HEK293 (cell line): ENCODE measurements at regions of chr12 and their contacts with region 1.

Region 1: GRCh38 chr12:68745904-68746571 is at the start of gene SLC35E3:
- H3K4me3 ChIP-seq: peak within 1 kb of the TSS; percentile 55
- H3K27ac ChIP-seq: peak within 1 kb of the TSS; percentile 11; the same call in 1 of the 2 replicates
- H3K4me1 ChIP-seq: no peaks in the 10 kb centered on the region
- CTCF ChIP-seq: no peak

Region 2: GRCh38 chr12:68675101-68675842 is 70.8 kb before region 1 on chr12:
- CTCF ChIA-PET with region 1: no interaction called
- POLR2A ChIA-PET with region 1: no interaction called
- H3K4me3 ChIP-seq: no peak overlapping the region
- H3K27ac ChIP-seq: no peak overlapping the region
- H3K4me1 ChIP-seq: no peaks in the 10 kb centered on the region
- CTCF ChIP-seq: no peak

Region 3: DNA sequence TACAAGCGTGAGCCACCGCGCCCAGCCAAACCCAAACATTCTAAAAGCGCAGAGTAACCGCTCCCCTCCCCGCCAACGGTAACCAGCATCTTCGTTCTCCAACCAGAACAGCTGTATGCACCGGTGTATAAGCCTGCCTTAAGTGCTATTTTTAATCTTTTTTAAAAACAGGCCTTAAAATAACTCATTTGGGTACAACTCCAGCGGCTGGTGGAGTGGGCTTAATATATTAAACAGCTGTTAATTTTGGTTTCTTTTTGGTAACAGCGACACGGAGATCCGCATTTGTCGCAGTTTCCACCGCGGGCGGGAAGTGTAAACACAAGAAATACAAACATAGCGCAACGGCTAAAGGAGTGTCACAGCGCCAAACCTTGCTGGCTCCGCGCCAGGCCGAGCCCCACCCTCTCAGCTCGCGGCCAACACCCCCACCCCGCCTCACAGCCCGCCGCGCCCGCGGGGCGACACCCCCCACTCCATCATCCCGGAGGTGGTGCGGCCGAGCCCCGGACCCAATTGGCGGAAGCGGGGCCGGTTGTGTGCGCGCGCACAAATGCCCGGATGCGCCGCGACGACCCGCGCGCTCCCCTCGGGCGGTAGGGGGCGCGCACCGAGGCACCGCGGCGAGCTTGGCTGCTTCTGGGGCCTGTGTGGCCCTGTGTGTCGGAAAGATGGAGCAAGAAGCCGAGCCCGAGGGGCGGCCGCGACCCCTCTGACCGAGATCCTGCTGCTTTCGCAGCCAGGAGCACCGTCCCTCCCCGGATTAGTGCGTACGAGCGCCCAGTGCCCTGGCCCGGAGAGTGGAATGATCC is 61.7 kb after region 1 on chr12 and contains the start of gene MDM2:
- CTCF ChIA-PET with region 1: interaction called, 5 read pairs
- POLR2A ChIA-PET with region 1: interaction called, 61 read pairs
- H3K4me3 ChIP-seq: peak within 1 kb of the TSS; percentile 97
- H3K27ac ChIP-seq: peak within 1 kb of the TSS; percentile 100
- H3K4me1 ChIP-seq: peaks cover 8% of the 10 kb centered on the region; the same call in 1 of the 2 replicates
- CTCF ChIP-seq: peak; percentile 98

Region 4: GRCh38 chr12:68815232-68815927 is 69.3 kb after region 1 on chr12:
- CTCF ChIA-PET with region 1: no interaction called
- POLR2A ChIA-PET with region 1: interaction called, 17 read pairs
- H3K4me3 ChIP-seq: peak overlapping the region; percentile 12
- H3K27ac ChIP-seq: no peak overlapping the region
- H3K4me1 ChIP-seq: 0 out of 2 replicates have a peak, but pooled peaks cover 11% of the 10 kb centered on the region
- CTCF ChIP-seq: no peak